Posterior vena cava (tissue), 2 donors: ENCODE measurements at regions of chr5 and their contacts with region 1.

Region 1: GRCh38 chr5:136042665-136043121 is 13.9 kb downstream of the TGFBI start:
- DNase-seq: no peak

Region 2: GRCh38 chr5:134845852-134846640 is 1196.6 kb before region 1 on chr5 and contains the start of gene C5orf24:
- intact Hi-C with region 1: loop called in 1 of 2 experiments (anchors 10 kb)
- DNase-seq: peak; percentile 99
- total RNA-seq, gene C5orf24: 53.1 to 58.7 TPM